ENCODE measurements at regions of chr2 and their contacts with region 1.

Region 1: DNA sequence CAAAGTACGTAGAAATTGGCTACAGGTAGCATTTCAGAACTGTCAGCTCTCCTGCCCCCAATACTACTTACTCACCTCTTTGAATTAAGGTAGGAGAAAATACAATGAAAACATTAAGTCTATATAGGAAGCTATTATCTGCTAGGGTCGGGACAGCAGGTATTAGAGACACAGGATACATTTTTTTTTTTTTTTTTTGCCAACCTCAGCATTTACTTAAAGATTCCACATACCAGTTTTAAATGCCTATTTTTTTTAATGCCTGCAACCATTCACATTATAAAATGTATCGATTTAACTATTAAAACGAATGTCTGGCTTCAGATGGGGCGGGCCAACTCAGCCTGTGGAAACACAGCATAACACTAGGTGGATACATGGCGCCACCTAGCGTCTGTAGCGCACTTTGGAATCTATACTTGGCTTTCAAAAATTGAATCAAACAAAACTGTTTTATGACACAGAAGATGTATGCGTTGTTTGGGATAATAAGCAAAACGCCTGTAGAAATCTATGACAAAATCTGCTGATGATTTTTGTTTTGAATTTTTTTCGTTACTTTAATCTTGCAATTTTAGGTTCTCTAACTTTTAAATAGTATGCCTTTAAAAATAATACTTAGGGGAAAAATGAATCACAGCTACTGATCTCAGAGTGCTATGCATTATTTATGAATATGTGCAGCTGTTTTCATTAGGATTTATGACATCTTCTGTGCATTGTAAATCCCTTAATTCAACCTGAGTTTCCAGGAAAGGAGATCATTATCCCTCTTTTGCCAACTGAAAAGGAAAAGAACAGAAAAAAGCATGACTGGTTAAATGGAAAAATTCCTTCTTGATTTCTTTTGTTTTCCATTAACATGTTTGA is 261.0 kb downstream of the NYAP2 start:
- DNase-seq: peak; percentile 84
- ATAC-seq: peak; percentile 89
- H3K4me3 ChIP-seq: no peak overlapping the region
- H3K27ac ChIP-seq: no peak overlapping the region
- H3K4me1 ChIP-seq: no peaks in the 10 kb centered on the region
- H3K27me3 ChIP-seq: no peaks in the 10 kb centered on the region
- CTCF ChIP-seq: peak; percentile 92

Region 2: GRCh38 chr2:224938651-224939182 is 721.8 kb before region 1 on chr2:
- CTCF ChIA-PET with region 1: no interaction called
- POLR2A ChIA-PET with region 1: no interaction called
- intact Hi-C with region 1: loop called (anchors 10 kb)
- DNase-seq: no peak
- ATAC-seq: no peak
- H3K4me3 ChIP-seq: no peak overlapping the region
- H3K27ac ChIP-seq: no peak overlapping the region
- H3K4me1 ChIP-seq: peaks cover 11% of the 10 kb centered on the region
- H3K27me3 ChIP-seq: no peaks in the 10 kb centered on the region
- CTCF ChIP-seq: no peak

Region 3: GRCh38 chr2:225282858-225283710 is 377.4 kb before region 1 on chr2:
- CTCF ChIA-PET with region 1: no interaction called
- POLR2A ChIA-PET with region 1: no interaction called
- intact Hi-C with region 1: loop called (anchors 1 kb)
- DNase-seq: peak; percentile 75
- ATAC-seq: peak; percentile 79
- H3K4me3 ChIP-seq: no peak overlapping the region
- H3K27ac ChIP-seq: no peak overlapping the region
- H3K4me1 ChIP-seq: peaks cover 9% of the 10 kb centered on the region
- H3K27me3 ChIP-seq: no peaks in the 10 kb centered on the region
- CTCF ChIP-seq: peak; percentile 84